Activated T-helper 1 cell treated with anti-CD3 and anti-CD28 coated beads, Interleukin-12 subunit alpha, Interleukin-12 subunit beta, Interleukin-2, Interleukin-4 antibody, amounts not matched to agents 30 ng/mL and 10 ng/mL and 1 ng/mL, durations not matched to agents 14 hours and 24 hours and 36 hours (primary cell): ENCODE measurements at regions of chr7 and their contacts with region 1.

Region 1: GRCh38 chr7:116929914-116930913 is 23.1 kb upstream of the ST7 start:
- DNase-seq: peak; percentile 58
- H3K4me3 Mint-ChIP-seq: no peak overlapping the region
- H3K27ac Mint-ChIP-seq: no peak overlapping the region
- H3K4me1 Mint-ChIP-seq: peaks cover 7% of the 10 kb centered on the region
- H3K27me3 Mint-ChIP-seq: peaks cover 20% of the 10 kb centered on the region

Region 2: DNA sequence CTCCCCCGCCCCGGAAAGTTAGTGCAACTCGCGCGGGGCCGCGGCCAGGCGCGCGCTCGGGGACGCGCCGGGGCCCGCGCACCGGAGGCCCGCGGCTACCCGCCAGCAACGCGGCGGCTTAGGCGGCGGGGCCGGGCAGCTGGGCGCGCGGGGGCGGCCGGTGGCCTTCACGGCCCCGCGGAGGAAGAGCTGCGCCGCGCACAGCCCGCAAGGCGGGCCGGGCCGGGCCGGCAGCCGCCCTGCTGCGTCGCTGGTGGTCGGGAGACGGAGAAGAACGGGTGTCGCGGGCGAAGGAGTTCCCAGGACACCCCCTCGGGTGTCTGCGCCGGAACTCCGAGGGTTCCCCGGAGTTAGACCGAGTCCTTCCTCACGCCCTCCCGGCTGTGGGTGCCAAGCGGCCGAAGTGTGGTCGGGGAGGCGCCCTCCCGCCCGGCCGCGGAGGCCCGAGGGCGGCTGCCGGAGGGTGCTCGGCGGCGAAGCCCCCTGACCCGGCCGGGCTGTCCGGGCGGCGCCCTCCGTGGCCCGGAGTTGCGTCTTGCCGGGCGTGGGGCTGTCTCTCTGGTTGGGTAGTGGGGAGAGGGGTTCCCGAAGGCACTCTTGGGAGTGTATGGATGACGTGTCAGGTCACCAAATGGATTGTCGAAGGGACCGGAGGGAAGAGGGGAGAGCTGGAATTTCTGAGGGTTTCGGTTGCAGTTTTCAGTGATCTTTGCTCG is 23.7 kb after region 1 on chr7:
- intact Hi-C with region 1: loop called (anchors 1 kb)
- DNase-seq: no peak
- H3K4me3 Mint-ChIP-seq: peak overlapping the region; percentile 93
- H3K27ac Mint-ChIP-seq: peak overlapping the region; percentile 87
- H3K4me1 Mint-ChIP-seq: peaks cover 12% of the 10 kb centered on the region
- H3K27me3 Mint-ChIP-seq: peaks cover 12% of the 10 kb centered on the region

Region 3: DNA sequence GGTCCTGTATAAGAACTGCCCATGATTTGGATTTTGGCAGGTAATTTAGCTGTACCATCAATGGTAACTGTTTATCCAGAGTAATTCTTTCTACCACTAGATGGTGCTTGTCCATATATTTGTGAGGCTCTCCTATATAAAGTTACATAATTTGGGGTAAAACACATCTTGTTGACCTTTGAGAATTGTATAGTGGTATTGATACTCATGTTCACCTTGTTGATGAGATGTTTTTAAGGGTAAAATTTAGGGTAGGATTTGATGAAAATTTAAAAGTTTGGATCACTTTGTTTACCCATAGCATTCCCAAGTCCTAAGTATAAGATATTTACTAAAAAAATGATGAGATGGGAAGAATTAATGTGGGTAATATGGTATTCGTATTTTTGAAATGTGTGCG is 54.7 kb after region 1 on chr7:
- intact Hi-C with region 1: loop called (anchors 2 kb)
- DNase-seq: no peak
- H3K4me3 Mint-ChIP-seq: no peak overlapping the region
- H3K27ac Mint-ChIP-seq: no peak overlapping the region
- H3K4me1 Mint-ChIP-seq: no peaks in the 10 kb centered on the region
- H3K27me3 Mint-ChIP-seq: no peaks in the 10 kb centered on the region

Region 4: GRCh38 chr7:117119192-117119924 is 189.1 kb after region 1 on chr7:
- intact Hi-C with region 1: loop called (anchors 2 kb)
- DNase-seq: peak; percentile 42
- H3K4me3 Mint-ChIP-seq: no peak overlapping the region
- H3K27ac Mint-ChIP-seq: no peak overlapping the region
- H3K4me1 Mint-ChIP-seq: no peaks in the 10 kb centered on the region
- H3K27me3 Mint-ChIP-seq: peaks cover 28% of the 10 kb centered on the region

Region 5: DNA sequence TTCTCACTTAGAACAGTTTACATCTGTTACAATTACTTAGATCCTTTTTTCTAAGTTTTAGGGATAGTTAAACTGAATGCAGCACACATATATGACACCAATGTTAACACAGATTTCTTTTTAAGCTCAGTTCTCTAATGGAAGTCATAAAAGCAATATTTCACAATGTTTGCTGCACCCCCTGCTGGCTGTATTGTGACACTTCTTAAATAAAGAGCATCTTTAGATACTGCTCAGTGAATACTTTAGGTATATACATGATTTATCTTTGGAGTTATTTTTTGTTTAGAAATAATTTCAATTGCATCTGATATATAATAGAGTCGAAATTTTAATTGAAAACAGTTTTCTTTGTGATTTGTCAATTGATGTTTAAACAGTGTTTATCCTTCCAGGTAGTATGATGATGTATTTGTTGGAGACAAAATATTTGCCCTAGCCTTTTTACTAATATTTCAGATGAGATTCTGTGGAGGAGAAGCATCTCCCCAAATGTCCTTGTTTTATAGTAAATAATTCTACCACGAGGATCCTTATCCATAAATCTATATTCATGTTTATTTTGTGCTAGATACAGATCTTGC is 197.5 kb after region 1 on chr7:
- intact Hi-C with region 1: loop called (anchors 1 kb)
- DNase-seq: no peak
- H3K4me3 Mint-ChIP-seq: no peak overlapping the region
- H3K27ac Mint-ChIP-seq: no peak overlapping the region
- H3K4me1 Mint-ChIP-seq: no peaks in the 10 kb centered on the region
- H3K27me3 Mint-ChIP-seq: peaks cover 9% of the 10 kb centered on the region